HCT116 (cell line): ENCODE measurements at regions of chr6 and their contacts with region 1.

Region 1: DNA sequence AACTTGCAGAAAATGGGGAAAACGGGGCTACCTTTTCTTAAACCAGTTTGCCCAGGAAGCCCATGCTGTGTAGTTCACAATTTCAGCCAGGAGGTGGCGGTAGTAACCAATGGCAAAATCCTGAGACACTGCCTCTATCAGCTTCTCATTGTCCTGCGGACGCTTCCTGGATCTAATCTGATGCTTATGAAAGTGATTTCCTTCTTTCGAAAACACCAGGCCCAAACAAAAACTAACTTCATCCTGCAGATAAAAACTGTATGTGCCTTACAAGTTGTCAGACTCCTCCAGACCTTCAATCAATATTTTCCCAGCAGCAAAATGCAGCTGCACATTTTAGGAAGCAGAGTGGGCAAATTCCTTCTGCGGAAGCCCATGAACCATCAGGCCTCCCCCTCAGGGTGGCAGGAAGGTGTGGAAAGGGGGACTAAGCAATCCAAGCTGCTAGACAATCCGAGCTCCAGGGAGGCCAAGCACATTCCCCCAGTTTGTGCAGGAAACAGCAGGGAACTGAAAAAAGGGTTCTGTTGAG is 88.5 kb downstream of the LY86 start:
- DNase-seq: peak; percentile 65
- ATAC-seq: peak; percentile 92
- H3K4me3 ChIP-seq: no peak overlapping the region
- H3K27ac ChIP-seq: no peak overlapping the region
- H3K4me1 ChIP-seq: peaks cover 0 to 21% of the 10 kb centered on the region in 2 experiments; a peak in 2 of 4 replicates
- H3K27me3 ChIP-seq: no peaks in the 10 kb centered on the region
- CTCF ChIP-seq: peak; percentile 85 to 92 (median 92)
- POLR2A ChIP-seq: no peak
- RAD21 ChIP-seq: peak; percentile 97

Region 2: GRCh38 chr6:6696867-6697531 is 20.0 kb after region 1 on chr6:
- CTCF ChIA-PET with region 1: interaction called, 11 read pairs
- POLR2A ChIA-PET with region 1: no interaction called
- RAD21 ChIA-PET with region 1: no interaction called
- intact Hi-C with region 1: no loop called
- DNase-seq: peak; percentile 63
- ATAC-seq: peak; percentile 63
- H3K4me3 ChIP-seq: no peak overlapping the region
- H3K27ac ChIP-seq: no peak overlapping the region
- H3K4me1 ChIP-seq: peaks cover 23 to 42% of the 10 kb centered on the region in 2 experiments
- H3K27me3 ChIP-seq: no peaks in the 10 kb centered on the region
- CTCF ChIP-seq: peak; percentile 66 to 98 (median 98); a peak in 5 of 6 replicates
- POLR2A ChIP-seq: no peak
- RAD21 ChIP-seq: peak; percentile 86

Region 3: DNA sequence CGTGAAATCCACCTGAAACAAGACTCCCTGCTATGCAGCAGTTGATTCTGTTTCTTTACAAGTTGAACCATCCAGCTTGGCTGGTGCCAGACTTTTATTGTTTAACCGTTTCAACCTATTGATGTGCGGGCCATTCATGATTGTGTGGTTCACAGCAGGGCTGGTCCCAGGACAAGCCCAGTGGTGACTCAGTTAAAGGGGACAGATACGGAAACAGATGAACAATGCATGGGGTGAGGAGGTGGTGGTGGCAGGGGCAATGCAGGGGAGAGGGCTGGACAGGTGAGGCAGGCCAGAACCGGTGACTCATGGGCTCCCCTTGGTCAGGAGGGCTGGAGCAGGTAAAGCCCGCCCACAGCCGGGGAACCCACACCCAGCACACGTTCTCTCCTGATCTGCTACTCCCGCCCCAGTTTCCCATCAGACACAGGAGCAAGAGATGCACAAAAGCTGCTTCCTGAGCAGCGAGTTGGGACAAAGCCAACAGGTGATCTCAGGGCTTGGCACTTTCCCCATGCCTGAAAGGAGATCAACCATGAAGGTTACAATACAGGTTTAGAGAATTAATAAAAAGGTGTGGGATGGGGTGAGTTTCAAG is 143.8 kb after region 1 on chr6:
- CTCF ChIA-PET with region 1: no interaction called
- POLR2A ChIA-PET with region 1: no interaction called
- RAD21 ChIA-PET with region 1: no interaction called
- intact Hi-C with region 1: loop called (anchors 2 kb)
- DNase-seq: peak; percentile 98
- ATAC-seq: peak; percentile 84
- H3K4me3 ChIP-seq: peak overlapping the region in 1 of 2 experiments; percentile 7; a peak in 2 of 4 replicates
- H3K27ac ChIP-seq: peak overlapping the region; percentile 60
- H3K4me1 ChIP-seq: peaks cover 54 to 89% of the 10 kb centered on the region in 2 experiments
- H3K27me3 ChIP-seq: no peaks in the 10 kb centered on the region
- CTCF ChIP-seq: no peak
- POLR2A ChIP-seq: no peak
- RAD21 ChIP-seq: no peak

Region 4: DNA sequence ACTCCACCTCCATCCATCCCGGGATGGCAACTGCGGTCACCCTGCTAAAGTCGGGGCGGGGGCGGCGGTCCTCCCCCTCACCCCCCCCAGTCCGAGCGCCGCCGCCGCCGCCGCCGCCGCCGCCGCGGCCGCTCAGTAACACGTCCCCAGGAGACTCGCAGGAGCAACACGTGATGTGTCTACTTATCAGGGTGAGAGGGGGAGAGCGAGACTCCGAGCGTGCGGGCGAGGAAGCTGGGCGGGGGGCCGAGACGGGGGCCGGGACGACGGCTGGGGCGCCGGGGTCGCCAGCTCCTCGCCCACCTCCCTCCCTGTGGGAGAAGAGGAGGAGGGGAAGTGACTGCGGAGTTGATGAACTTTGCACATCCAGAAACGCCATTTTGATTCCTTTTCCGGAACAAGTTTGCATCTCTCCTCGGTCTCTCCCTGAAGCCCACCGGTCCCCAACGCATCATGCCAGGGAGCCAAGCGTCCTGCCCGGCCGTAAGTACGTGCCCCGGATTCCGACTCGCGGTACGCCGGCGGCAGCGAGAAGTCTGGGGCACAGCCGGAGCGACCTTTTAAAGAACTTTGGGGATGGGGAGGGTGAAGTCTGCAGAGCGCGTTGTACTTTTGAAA is 430.7 kb after region 1 on chr6 and contains the start of gene RREB1:
- CTCF ChIA-PET with region 1: no interaction called
- POLR2A ChIA-PET with region 1: no interaction called
- RAD21 ChIA-PET with region 1: no interaction called
- intact Hi-C with region 1: loop called (anchors 5 kb)
- DNase-seq: peak; percentile 15
- ATAC-seq: peak; percentile 70
- H3K4me3 ChIP-seq: peak within 1 kb of the TSS; percentile 90 to 95
- H3K27ac ChIP-seq: peak within 1 kb of the TSS; percentile 92
- H3K4me1 ChIP-seq: peaks cover 18 to 41% of the 10 kb centered on the region in 2 experiments
- H3K27me3 ChIP-seq: no peaks in the 10 kb centered on the region
- CTCF ChIP-seq: no peak
- POLR2A ChIP-seq: no peak
- RAD21 ChIP-seq: no peak
- total RNA-seq, gene RREB1: 47.9 TPM

Region 5: GRCh38 chr6:7172649-7173048 is 495.7 kb after region 1 on chr6:
- CTCF ChIA-PET with region 1: no interaction called
- POLR2A ChIA-PET with region 1: no interaction called
- RAD21 ChIA-PET with region 1: no interaction called
- intact Hi-C with region 1: no loop called
- DNase-seq: no peak
- ATAC-seq: no peak
- H3K4me3 ChIP-seq: no peak overlapping the region
- H3K27ac ChIP-seq: no peak overlapping the region
- H3K4me1 ChIP-seq: no peaks in the 10 kb centered on the region
- H3K27me3 ChIP-seq: no peaks in the 10 kb centered on the region
- CTCF ChIP-seq: no peak
- POLR2A ChIP-seq: no peak
- RAD21 ChIP-seq: no peak

Region 6: GRCh38 chr6:7389451-7390225 is 712.7 kb after region 1 on chr6 and contains the starts of genes CAGE1 and RIOK1:
- CTCF ChIA-PET with region 1: no interaction called
- POLR2A ChIA-PET with region 1: no interaction called
- RAD21 ChIA-PET with region 1: no interaction called
- intact Hi-C with region 1: loop called (anchors 5 kb)
- DNase-seq: peak; percentile 91
- ATAC-seq: peak; percentile 96
- H3K4me3 ChIP-seq: peak within 1 kb of the TSS; percentile 91 to 96
- H3K27ac ChIP-seq: peak within 1 kb of the TSS; percentile 84
- H3K4me1 ChIP-seq: peaks cover 5 to 21% of the 10 kb centered on the region in 2 experiments; a peak in 3 of 4 replicates
- H3K27me3 ChIP-seq: no peaks in the 10 kb centered on the region
- CTCF ChIP-seq: peak in 1 of 3 experiments; percentile 18; a peak in 1 of 6 replicates
- POLR2A ChIP-seq: peak; percentile 93
- RAD21 ChIP-seq: peak; percentile 17; the same call in 1 of the 2 replicates
- total RNA-seq, gene CAGE1: 0.20 TPM
- total RNA-seq, gene RIOK1: 39.0 TPM